Activated CD8-positive, alpha-beta memory T cell treated with anti-CD3 and anti-CD28 coated beads, Interleukin-2, amount 10 ng/mL, durations not matched to agents 7 days and 5 days (primary cell): ENCODE measurements at regions of chr15 and their contacts with region 1.

Region 1: DNA sequence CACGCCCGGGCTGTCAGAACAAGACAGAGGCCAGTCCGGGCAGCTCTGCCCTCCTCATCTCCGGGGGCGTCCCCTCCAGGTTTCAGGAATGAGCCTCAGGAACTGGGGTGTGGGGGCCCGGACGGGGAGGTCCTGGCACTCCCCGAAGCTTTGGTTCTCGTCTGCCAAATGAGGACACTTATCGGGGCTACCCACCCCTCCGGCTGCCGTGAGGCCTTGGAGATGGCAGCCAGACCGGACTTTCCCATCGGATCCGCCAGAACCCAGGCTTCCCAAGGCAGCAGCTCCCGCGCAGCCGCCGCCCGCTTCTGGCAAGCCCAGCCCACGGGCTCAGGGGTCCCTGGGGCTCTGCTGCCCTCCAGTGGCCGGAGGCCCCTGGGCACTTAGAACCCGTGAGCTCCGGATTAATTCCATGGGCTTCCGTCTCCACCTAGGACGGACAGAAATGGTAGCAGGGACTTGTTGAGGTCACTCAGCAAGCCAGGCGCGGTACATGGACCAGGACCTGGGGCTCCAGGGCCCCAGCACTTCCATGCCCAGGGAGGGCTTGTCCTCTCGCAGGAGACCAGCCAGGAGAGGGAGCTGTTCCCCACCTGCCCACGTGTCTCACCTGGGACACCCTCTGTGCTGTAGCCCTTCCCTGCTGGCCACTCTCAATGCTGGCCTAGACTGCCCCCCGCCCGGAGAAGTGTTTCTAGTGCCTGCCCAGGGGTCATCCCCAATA is 89.4 kb downstream of the LINGO1 start:
- DNase-seq: peak; percentile 83
- ATAC-seq: peak; percentile 93
- H3K4me3 Mint-ChIP-seq: peak overlapping the region; percentile 68
- H3K27ac Mint-ChIP-seq: no peak overlapping the region
- H3K4me1 Mint-ChIP-seq: peaks cover 16% of the 10 kb centered on the region
- H3K27me3 Mint-ChIP-seq: peaks cover 1% of the 10 kb centered on the region

Region 2: DNA sequence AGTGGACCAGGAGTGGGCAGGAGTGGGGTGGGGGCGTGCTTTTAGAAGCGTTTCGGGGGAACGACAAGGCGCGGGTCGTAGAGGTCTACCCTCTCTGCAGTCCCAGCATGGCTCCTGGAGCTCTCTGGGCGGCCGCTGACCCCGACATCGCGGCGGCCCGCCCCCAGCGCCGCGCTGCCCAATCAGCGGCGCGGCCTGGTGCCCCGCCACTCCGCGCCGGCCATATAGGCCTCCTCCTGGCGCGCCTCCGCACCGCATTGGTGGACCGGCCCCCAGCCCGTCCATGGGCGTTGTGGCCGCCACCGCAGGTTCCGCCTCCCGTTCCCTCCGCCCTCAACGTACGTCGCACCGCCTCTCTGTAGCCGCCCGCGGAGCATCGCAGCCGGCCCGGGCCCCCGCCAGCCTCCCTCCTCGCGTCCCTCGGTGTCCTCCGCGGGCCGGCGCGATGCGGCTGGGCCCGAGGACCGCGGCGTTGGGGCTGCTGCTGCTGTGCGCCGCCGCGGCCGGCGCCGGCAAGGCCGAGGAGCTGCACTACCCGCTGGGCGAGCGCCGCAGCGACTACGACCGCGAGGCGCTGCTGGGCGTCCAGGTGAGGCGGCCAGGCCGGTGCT is 611.8 kb before region 1 on chr15 and contains the start of gene RCN2:
- CTCF ChIA-PET with region 1: interaction called, 10 read pairs
- DNase-seq: peak; percentile 95
- ATAC-seq: peak; percentile 99
- H3K4me3 Mint-ChIP-seq: peak within 1 kb of the TSS; percentile 82
- H3K27ac Mint-ChIP-seq: peak within 1 kb of the TSS; percentile 87
- H3K4me1 Mint-ChIP-seq: peaks cover 40% of the 10 kb centered on the region
- H3K27me3 Mint-ChIP-seq: peaks cover 3% of the 10 kb centered on the region
- total RNA-seq, gene RCN2: 22.5 to 28.6 TPM

Region 3: GRCh38 chr15:77024271-77025082 is 518.8 kb before region 1 on chr15:
- CTCF ChIA-PET with region 1: interaction called, 15 read pairs
- DNase-seq: peak; percentile 79
- ATAC-seq: peak; percentile 20
- H3K4me3 Mint-ChIP-seq: no peak overlapping the region
- H3K27ac Mint-ChIP-seq: peak overlapping the region; percentile 99
- H3K4me1 Mint-ChIP-seq: peaks cover 61% of the 10 kb centered on the region
- H3K27me3 Mint-ChIP-seq: no peaks in the 10 kb centered on the region

Region 4: GRCh38 chr15:77118882-77119321 is 424.4 kb before region 1 on chr15:
- CTCF ChIA-PET with region 1: interaction called, 57 read pairs
- DNase-seq: peak; percentile 60
- ATAC-seq: peak; percentile 78
- H3K4me3 Mint-ChIP-seq: no peak overlapping the region
- H3K27ac Mint-ChIP-seq: no peak overlapping the region
- H3K4me1 Mint-ChIP-seq: peaks cover 15% of the 10 kb centered on the region
- H3K27me3 Mint-ChIP-seq: no peaks in the 10 kb centered on the region

Region 5: DNA sequence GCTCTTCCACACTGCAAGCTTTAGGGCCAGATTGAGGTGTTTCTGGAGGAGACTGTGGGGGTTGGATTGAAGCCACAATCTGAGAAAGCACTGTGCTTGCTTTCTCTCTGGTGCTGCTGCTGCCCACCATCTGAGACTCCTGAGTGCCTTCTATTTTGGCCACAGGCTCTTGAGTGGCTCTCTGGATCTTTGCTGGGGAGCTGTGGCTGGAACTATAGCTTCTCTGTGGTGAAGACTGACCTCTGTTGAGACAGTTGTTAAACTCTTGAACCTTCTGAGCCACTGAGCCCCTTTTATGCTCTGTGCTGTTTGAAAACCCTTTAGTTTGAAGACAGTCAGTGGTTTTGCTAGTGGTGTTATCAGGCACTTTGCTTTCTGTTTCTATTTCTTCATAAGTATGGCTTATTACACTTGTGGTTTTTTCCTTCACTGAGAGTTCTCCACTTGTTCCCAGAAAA is 363.8 kb before region 1 on chr15:
- CTCF ChIA-PET with region 1: interaction called, 71 read pairs
- DNase-seq: peak; percentile 66
- ATAC-seq: peak; percentile 82
- H3K4me3 Mint-ChIP-seq: peak overlapping the region; percentile 27
- H3K27ac Mint-ChIP-seq: peak overlapping the region; percentile 92
- H3K4me1 Mint-ChIP-seq: peaks cover 43% of the 10 kb centered on the region
- H3K27me3 Mint-ChIP-seq: no peaks in the 10 kb centered on the region

Region 6: GRCh38 chr15:77409259-77410156 is 133.8 kb before region 1 on chr15:
- CTCF ChIA-PET with region 1: interaction called, 11 read pairs
- DNase-seq: peak; percentile 75
- ATAC-seq: peak; percentile 96
- H3K4me3 Mint-ChIP-seq: peak overlapping the region; percentile 64
- H3K27ac Mint-ChIP-seq: peak overlapping the region; percentile 90
- H3K4me1 Mint-ChIP-seq: peaks cover 38% of the 10 kb centered on the region
- H3K27me3 Mint-ChIP-seq: no peaks in the 10 kb centered on the region

Region 7: GRCh38 chr15:77507911-77508310 is 35.4 kb before region 1 on chr15:
- CTCF ChIA-PET with region 1: interaction called, 10 read pairs
- DNase-seq: no peak
- ATAC-seq: no peak
- H3K4me3 Mint-ChIP-seq: no peak overlapping the region
- H3K27ac Mint-ChIP-seq: no peak overlapping the region
- H3K4me1 Mint-ChIP-seq: peaks cover 10% of the 10 kb centered on the region
- H3K27me3 Mint-ChIP-seq: no peaks in the 10 kb centered on the region

Region 8: DNA sequence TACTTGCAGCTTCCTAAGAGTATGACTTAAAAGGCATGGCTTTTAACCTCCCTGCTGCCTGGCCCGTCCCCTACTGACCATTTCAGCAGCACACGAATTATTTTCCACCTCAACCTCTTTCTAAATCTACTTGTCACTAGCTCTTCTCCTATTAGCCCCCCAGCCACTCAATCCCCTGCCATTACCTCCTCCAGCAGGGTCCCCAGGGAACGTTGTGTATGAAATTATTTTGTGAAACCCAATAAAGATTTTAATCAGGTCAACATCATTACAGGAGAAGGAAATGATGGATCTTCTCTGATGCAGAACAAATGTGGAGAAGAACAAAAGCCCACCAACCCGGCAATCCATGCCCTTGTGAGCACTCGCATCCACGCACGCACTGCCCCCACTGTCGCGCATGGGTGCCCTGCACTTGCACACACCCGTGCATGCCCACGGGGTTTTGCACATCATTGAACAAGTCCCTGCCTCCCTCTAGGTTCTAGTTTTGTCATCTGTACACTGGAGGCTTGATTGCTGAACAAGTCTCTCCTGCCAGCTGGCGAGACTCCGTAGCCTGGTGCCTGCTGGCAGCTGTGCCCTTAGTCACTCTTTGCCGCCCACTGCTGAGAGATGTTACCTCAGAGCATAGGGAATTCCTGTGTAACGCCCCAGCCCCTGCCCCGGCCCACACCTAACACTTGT is 37.8 kb after region 1 on chr15:
- CTCF ChIA-PET with region 1: no interaction called
- DNase-seq: no peak
- ATAC-seq: no peak
- H3K4me3 Mint-ChIP-seq: no peak overlapping the region
- H3K27ac Mint-ChIP-seq: no peak overlapping the region
- H3K4me1 Mint-ChIP-seq: no peaks in the 10 kb centered on the region
- H3K27me3 Mint-ChIP-seq: peaks cover 5% of the 10 kb centered on the region

Region 9: DNA sequence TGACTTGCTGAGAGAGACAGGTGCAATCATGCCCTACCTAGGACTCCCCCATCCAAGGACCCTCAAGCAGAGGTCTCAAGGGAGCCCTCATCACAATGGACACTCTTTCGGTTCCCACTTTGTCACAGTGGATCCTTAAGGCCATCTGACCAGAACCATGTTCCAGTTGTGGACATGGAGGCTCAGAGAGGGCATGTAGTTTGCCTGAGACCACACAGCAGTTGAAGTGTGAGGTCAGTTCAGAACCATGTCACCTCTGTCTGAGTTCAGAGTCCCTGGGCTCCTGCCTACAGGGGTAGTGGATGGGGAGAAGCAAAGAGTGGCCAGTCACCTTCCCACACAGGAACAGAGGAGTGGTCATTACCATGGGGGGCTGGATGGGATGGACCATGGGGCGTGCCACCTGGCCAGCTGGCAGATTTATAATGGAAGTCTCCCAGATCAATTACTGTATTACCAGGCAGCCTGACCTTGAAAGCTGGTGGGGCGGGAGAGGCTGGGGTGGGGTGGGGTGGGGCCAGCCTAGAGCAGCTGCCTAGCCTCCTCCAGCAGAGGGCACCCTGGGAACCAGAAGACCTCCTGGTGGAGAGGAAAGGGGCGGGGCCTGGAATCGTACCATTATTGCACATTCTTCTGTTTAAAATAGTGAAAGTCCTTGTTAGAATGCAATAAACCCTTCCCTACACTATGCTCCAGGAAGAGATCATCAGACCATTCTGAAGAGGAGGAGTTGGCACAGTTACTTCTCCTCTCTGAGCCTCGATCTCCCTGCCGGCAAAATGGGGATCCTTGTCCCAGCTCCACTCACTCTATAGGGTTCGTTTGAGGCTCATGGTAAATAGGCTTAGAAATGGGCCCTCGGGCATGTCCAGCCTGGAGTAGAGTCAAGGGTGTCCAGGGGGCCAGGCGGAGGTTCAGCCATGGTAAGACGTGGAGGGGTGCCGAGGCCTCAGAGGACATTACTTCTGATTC is 116.3 kb after region 1 on chr15:
- CTCF ChIA-PET with region 1: no interaction called
- DNase-seq: peak; percentile 63
- ATAC-seq: peak; percentile 56
- H3K4me3 Mint-ChIP-seq: no peak overlapping the region
- H3K27ac Mint-ChIP-seq: no peak overlapping the region
- H3K4me1 Mint-ChIP-seq: no peaks in the 10 kb centered on the region
- H3K27me3 Mint-ChIP-seq: peaks cover 11% of the 10 kb centered on the region